Caco-2 (cell line): ENCODE measurements at regions of chr20 and their contacts with region 1.

Region 1: DNA sequence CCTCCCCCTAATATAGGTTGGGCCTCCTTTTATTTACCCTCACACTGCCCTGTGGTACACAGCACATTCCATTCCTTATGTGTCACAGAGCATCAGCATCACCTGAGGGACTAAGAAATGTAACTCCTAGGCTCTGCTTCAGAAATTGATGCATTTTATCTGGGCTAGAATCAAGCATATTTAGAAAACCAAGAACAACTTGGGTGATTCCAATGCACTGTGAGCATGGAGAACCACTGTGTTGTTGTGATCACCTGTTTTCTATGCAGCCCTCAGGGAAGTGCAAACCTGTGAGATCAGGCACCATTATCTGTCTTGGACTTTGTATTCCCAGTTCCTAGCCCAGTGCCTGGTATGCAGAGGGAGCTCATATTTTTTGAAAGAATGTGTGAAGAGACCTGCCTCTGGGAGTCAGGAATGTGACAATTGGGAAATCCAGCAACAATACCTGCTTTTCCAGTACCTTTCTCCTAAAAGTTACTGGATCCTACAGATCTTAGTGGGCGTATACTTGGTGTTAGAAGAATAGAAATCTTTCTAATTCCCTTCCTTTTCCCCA is 7.0 kb downstream of the KAT14 start:
- DNase-seq: peak; percentile 92 to 93
- H3K4me3 ChIP-seq: peak overlapping the region; percentile 40
- H3K4me3 Mint-ChIP-seq: peak overlapping the region; percentile 89
- H3K27ac Mint-ChIP-seq: peak overlapping the region; percentile 95
- H3K4me1 ChIP-seq: peaks cover 53% of the 10 kb centered on the region
- H3K4me1 Mint-ChIP-seq: peaks cover 24% of the 10 kb centered on the region
- H3K27me3 ChIP-seq: no peaks in the 10 kb centered on the region
- H3K27me3 Mint-ChIP-seq: no peaks in the 10 kb centered on the region
- CTCF ChIP-seq: no peak

Region 2: GRCh38 chr20:18056174-18057100 is 88.2 kb before region 1 on chr20:
- CTCF ChIA-PET with region 1: no interaction called
- POLR2A ChIA-PET with region 1: interaction called, 5 read pairs
- intact Hi-C with region 1: loop called (anchors 2 kb)
- DNase-seq: peak; percentile 49 to 63
- H3K4me3 ChIP-seq: peak overlapping the region; percentile 83
- H3K4me3 Mint-ChIP-seq: peak overlapping the region; percentile 85
- H3K27ac Mint-ChIP-seq: no peak overlapping the region
- H3K4me1 ChIP-seq: peaks cover 30% of the 10 kb centered on the region
- H3K4me1 Mint-ChIP-seq: peaks cover 29% of the 10 kb centered on the region
- H3K27me3 ChIP-seq: no peaks in the 10 kb centered on the region
- H3K27me3 Mint-ChIP-seq: no peaks in the 10 kb centered on the region
- CTCF ChIP-seq: no peak

Region 3: DNA sequence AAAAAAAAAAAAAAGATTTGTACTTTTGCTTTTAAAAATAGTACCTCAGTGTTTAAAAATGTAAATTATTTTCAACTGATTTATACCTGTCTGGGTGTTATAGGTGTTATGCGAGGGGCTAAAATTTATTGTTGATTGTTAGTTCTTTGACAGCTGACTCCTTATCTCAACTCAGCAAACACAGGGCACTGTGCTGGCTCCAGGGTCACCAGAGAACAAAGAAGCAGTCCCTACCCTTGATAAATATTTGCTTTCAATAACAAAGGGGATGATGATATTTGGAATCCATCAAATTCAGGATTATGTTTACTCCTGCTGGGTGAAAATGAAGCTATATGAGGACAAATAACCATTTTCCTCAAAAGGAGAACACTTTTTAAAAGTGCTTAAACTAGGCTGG is 41.1 kb before region 1 on chr20:
- CTCF ChIA-PET with region 1: interaction called, 3 read pairs
- POLR2A ChIA-PET with region 1: no interaction called
- intact Hi-C with region 1: loop called (anchors 1 kb)
- DNase-seq: peak; percentile 73 to 77
- H3K4me3 ChIP-seq: no peak overlapping the region
- H3K4me3 Mint-ChIP-seq: no peak overlapping the region
- H3K27ac Mint-ChIP-seq: peak overlapping the region; percentile 71
- H3K4me1 ChIP-seq: peaks cover 40% of the 10 kb centered on the region
- H3K4me1 Mint-ChIP-seq: peaks cover 20% of the 10 kb centered on the region
- H3K27me3 ChIP-seq: no peaks in the 10 kb centered on the region
- H3K27me3 Mint-ChIP-seq: no peaks in the 10 kb centered on the region
- CTCF ChIP-seq: no peak

Region 4: DNA sequence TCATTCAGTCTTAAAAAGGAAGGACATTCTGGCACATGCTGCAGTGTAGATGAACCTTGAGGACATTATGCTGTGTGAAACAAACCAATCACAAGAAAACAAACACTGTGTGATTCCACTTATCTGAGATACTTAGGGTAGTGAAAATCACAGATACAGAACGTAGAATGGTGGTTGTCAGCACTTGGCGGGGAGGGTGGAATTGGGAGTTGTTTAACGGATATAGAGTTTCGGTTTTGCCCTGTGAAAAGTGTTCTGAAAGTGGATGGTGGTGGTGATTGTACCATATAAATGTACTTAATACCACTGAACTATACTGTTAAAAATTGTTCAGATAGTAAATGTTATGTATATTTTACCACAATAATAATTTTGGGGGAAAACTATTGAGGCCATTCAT is 11.4 kb after region 1 on chr20:
- CTCF ChIA-PET with region 1: no interaction called
- POLR2A ChIA-PET with region 1: interaction called, 7 read pairs
- intact Hi-C with region 1: loop called (anchors 1 kb)
- DNase-seq: no peak
- H3K4me3 ChIP-seq: no peak overlapping the region
- H3K4me3 Mint-ChIP-seq: no peak overlapping the region
- H3K27ac Mint-ChIP-seq: no peak overlapping the region
- H3K4me1 ChIP-seq: peaks cover 21% of the 10 kb centered on the region
- H3K4me1 Mint-ChIP-seq: peaks cover 13% of the 10 kb centered on the region
- H3K27me3 ChIP-seq: no peaks in the 10 kb centered on the region
- H3K27me3 Mint-ChIP-seq: no peaks in the 10 kb centered on the region
- CTCF ChIP-seq: no peak

Region 5: DNA sequence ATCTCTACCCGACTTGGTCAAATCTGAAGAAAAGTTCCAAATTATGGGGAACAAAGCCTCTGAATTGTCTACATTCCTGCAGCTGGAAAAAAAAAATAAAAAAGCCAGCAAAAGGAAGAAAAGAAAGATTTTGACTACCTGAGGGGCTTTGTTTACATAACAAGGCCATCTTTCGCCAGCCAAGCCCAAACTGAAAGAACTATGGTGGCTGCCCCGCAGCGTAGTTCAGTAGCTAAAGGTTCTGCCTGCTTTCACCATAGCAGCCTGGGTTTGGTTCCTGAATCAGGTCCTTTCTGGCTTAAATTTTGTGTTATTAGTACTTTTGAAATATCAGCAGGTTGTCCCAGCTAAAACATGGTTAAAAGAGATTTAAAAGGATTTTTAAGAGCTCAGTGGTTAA is 179.1 kb after region 1 on chr20:
- CTCF ChIA-PET with region 1: no interaction called
- POLR2A ChIA-PET with region 1: no interaction called
- intact Hi-C with region 1: no loop called
- DNase-seq: no peak
- H3K4me3 ChIP-seq: no peak overlapping the region
- H3K4me3 Mint-ChIP-seq: no peak overlapping the region
- H3K27ac Mint-ChIP-seq: peak overlapping the region; percentile 69
- H3K4me1 ChIP-seq: peaks cover 63% of the 10 kb centered on the region
- H3K4me1 Mint-ChIP-seq: peaks cover 17% of the 10 kb centered on the region
- H3K27me3 ChIP-seq: no peaks in the 10 kb centered on the region
- H3K27me3 Mint-ChIP-seq: no peaks in the 10 kb centered on the region
- CTCF ChIP-seq: no peak